AG04450 (cell line): ENCODE measurements at regions of chr11 and their contacts with region 1.

Region 1: DNA sequence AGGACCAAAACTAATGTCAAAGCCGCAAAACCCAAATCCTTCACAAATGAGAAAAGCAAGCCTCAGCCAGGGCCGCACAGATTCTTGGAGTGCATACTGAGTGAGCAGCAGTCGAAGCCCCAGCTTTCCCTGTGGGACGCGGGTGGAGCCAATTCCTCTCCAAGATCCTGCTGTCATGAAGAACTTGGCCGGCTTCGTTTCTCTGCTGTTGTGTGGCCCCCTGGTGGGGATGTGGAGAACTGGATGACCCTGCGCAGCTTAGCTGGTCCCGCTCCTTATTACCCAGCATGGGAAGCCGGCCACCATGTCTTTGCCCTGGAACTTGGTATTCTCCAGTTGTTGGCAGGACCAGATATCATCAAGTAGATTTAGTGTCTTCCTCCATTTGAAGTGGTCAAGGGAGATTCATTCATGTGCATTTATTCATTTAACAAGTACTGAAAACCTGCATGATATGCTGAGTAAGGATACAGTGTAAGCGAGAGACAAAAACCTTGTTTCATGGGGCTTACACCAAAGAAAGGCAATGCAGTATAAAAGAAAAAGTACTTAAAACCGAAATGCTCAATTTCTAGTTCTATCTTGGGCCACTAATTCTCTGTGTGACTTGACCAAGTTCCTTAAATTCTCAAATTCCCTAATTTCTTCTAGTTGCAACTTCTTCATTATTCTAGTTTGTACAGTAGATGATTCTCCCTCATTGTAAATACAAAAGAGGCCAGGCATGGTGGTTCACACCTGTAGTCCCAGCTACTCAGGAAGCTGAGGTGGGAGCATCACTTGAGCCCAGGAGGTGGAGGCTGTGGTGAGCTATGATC is 56.7 kb upstream of the CRTAM start:
- DNase-seq: peak; percentile 80
- H3K4me3 ChIP-seq: no peak overlapping the region
- H3K27ac ChIP-seq: no peak overlapping the region
- H3K27me3 ChIP-seq: no peaks in the 10 kb centered on the region
- CTCF ChIP-seq: peak; percentile 94

Region 2: GRCh38 chr11:122354025-122354697 is 427.4 kb before region 1 on chr11:
- CTCF ChIA-PET with region 1: no interaction called
- POLR2A ChIA-PET with region 1: no interaction called
- DNase-seq: no peak
- H3K4me3 ChIP-seq: no peak overlapping the region
- H3K27ac ChIP-seq: no peak overlapping the region
- H3K27me3 ChIP-seq: no peaks in the 10 kb centered on the region
- CTCF ChIP-seq: no peak

Region 3: DNA sequence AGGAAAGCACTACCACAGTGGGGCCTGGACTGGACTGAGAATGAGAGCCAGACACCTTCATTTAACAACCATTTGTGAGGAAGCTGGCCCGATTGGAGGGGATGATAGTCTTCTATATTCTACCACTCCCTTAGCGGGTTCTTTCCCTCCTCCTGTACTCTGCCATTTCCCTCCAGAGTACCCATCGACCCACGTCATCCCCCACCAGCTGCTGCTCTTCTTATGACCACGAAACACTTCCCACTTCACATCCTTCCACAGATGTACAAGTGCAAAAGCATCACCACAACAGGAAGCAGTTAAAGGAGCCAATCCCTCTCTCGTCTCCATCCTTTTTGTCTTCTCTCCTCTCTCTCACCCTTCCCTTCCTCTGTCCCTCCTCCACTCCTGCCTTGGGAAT is 144.0 kb before region 1 on chr11:
- CTCF ChIA-PET with region 1: interaction called, 106 read pairs
- POLR2A ChIA-PET with region 1: interaction called, 4 read pairs
- DNase-seq: no peak
- H3K4me3 ChIP-seq: no peak overlapping the region
- H3K27ac ChIP-seq: no peak overlapping the region
- H3K27me3 ChIP-seq: no peaks in the 10 kb centered on the region
- CTCF ChIP-seq: no peak

Region 4: DNA sequence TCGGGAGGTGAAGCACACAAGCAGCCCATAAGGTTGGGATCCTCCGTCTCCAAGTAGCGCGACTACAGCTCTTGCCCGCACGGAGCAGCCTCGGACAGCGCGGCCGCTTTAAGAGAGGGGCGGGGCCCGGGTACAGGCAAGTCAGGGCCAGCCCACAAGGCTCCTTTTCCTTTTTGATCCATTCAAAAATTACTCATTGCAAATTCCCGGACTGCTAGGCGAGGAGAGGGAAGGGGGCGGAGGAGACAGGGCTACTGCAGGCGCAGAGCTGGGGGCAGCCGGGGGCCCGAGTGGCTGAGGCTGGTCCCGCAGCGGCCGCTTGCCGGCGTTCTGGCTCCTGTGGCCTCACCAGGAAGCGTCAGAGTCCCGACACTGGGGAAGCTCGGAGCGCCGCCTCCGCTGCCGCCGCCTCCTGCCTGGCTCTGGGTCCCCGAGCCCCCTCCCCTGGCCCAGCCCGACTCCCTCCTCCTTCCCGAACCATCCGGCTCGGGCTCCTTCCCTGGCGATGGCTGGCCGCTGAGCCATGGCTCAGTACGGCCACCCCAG is 126.0 kb before region 1 on chr11 and contains the start of gene UBASH3B:
- CTCF ChIA-PET with region 1: interaction called, 12 read pairs
- POLR2A ChIA-PET with region 1: interaction called, 10 read pairs
- DNase-seq: no peak
- H3K4me3 ChIP-seq: peak within 1 kb of the TSS; percentile 84
- H3K27ac ChIP-seq: peak within 1 kb of the TSS; percentile 89
- H3K27me3 ChIP-seq: no peaks in the 10 kb centered on the region
- CTCF ChIP-seq: no peak
- polyA plus RNA-seq, gene UBASH3B: 19.1 and 25.0 TPM in 2 replicates

Region 5: GRCh38 chr11:122706291-122707088 is 75.1 kb before region 1 on chr11:
- CTCF ChIA-PET with region 1: interaction called, 12 read pairs
- POLR2A ChIA-PET with region 1: no interaction called
- DNase-seq: no peak
- H3K4me3 ChIP-seq: no peak overlapping the region
- H3K27ac ChIP-seq: peak overlapping the region; percentile 71
- H3K27me3 ChIP-seq: no peaks in the 10 kb centered on the region
- CTCF ChIP-seq: no peak

Region 6: DNA sequence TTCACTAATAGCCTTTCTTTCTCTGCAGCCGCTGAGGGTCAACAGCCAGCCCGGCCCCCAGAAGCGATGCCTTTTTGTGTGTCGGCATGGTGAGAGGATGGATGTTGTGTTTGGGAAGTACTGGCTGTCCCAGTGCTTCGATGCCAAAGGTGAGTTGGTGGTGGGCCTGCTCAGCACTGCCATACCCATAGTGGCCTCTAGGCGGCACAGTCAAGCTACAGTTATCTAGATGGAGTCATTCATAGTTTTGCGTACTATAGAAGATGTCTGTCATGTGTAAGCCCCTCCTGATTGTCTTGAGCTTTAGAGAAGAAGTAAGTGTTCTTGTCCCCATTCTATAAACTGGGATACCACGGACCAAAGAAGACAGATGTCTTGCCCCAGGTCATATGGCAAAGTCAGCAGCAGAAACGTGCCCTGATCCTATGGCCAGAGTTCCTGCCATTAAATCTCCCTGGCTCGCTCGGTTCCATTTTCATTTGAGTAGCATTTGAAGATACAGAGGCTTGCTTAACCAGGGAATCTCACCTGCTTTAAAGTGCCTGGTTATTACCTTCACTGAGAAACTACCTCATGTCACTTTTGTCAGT is 14.6 kb after region 1 on chr11:
- CTCF ChIA-PET with region 1: interaction called, 21 read pairs
- POLR2A ChIA-PET with region 1: interaction called, 3 read pairs
- DNase-seq: no peak
- H3K4me3 ChIP-seq: no peak overlapping the region
- H3K27ac ChIP-seq: no peak overlapping the region
- H3K27me3 ChIP-seq: no peaks in the 10 kb centered on the region
- CTCF ChIP-seq: peak; percentile 79

Region 7: DNA sequence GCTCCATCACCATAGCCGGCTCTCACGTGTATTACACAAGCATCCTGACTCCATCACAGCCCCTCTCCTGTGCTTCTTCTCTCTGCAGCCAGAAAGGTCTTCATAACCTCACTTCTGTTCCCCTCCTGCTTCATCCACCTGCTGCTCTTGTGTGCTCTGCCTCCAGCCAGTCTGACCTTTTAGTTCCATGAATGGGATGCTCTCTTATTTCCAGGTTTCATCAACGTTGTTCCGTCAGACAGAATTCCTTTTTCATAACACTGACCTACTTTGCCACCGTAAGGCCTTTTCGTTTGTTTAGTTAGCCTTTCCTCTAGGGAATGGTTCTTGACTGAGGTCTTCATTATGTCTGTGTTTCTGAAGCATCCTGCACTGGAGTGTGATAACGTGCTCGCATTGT is 667.2 kb after region 1 on chr11:
- CTCF ChIA-PET with region 1: no interaction called
- POLR2A ChIA-PET with region 1: no interaction called
- DNase-seq: no peak
- H3K4me3 ChIP-seq: no peak overlapping the region
- H3K27ac ChIP-seq: no peak overlapping the region
- H3K27me3 ChIP-seq: no peaks in the 10 kb centered on the region
- CTCF ChIP-seq: no peak